HCT116 (cell line): ENCODE measurements at regions of chr10 and their contacts with region 1.

Region 1: DNA sequence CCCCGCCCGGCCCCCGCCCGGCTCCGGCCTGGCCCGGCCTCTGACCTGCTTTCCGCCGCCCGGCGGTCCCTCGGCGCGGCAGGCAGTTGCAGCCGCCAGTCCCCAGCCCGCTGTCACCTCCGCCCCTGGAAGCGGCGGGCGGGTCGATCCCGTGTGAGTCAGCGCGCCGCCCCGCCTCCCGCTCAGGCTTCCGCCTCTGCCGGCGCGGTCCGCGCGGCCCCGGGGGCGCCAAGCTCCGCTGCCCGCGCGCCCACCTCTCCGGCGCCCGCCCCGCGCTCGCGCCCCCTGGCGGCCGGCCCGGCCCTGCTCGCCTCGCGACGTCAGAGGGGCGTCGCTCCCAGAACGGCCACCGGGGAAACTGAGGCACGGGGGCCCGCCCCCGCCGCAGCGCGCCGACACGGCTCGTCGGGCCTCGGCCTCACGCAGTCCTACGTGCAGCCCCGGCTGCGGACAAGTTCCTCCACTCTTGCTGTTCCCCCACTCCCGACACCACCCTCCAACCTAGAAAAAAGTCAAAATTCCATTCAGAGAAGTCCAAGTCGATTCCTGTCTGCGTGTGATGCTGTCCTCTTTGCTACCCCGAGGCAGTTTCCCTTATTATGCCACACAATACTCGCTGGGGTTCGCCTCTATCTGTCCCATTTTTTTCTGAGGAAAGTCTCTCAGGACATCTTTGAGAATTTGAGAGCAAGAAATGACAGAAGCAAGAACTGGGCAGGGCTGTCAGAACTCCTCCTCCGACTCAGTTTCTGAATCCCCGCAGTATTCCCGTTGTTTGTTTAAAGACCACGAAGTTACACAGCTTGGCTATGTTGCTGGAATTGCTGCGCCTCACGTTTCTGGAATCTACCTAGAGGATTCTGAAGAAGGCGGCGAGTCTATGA is at the start of gene DNMBP:
- DNase-seq: peak; percentile 63
- ATAC-seq: peak; percentile 76
- H3K4me3 ChIP-seq: peak within 1 kb of the TSS; percentile 78 to 93
- H3K27ac ChIP-seq: peak within 1 kb of the TSS; percentile 98
- H3K4me1 ChIP-seq: peaks cover 27 to 46% of the 10 kb centered on the region in 2 experiments
- H3K27me3 ChIP-seq: no peaks in the 10 kb centered on the region
- CTCF ChIP-seq: peak in 2 of 3 experiments; percentile 54 to 56; a peak in 4 of 6 replicates
- POLR2A ChIP-seq: no peak
- RAD21 ChIP-seq: no peak
- total RNA-seq, gene DNMBP: 60.3 TPM

Region 2: GRCh38 chr10:99779335-99779734 is 230.7 kb before region 1 on chr10:
- CTCF ChIA-PET with region 1: no interaction called
- POLR2A ChIA-PET with region 1: no interaction called
- RAD21 ChIA-PET with region 1: no interaction called
- intact Hi-C with region 1: loop called (anchors 1 kb)
- DNase-seq: no peak
- ATAC-seq: peak; percentile 35
- H3K4me3 ChIP-seq: peak overlapping the region; percentile 36 to 53
- H3K27ac ChIP-seq: peak overlapping the region; percentile 100
- H3K4me1 ChIP-seq: peaks cover 89 to 97% of the 10 kb centered on the region in 2 experiments
- H3K27me3 ChIP-seq: no peaks in the 10 kb centered on the region
- CTCF ChIP-seq: no peak
- POLR2A ChIP-seq: no peak
- RAD21 ChIP-seq: no peak

Region 3: GRCh38 chr10:99906470-99906869 is 103.6 kb before region 1 on chr10:
- CTCF ChIA-PET with region 1: interaction called, 5 read pairs
- POLR2A ChIA-PET with region 1: interaction called, 4 read pairs
- RAD21 ChIA-PET with region 1: no interaction called
- intact Hi-C with region 1: loop called (anchors 2 kb)
- DNase-seq: peak; percentile 90
- ATAC-seq: peak; percentile 92
- H3K4me3 ChIP-seq: peak overlapping the region in 1 of 2 experiments; percentile 1; a peak in 1 of 4 replicates
- H3K27ac ChIP-seq: peak overlapping the region; percentile 51; the same call in 1 of the 2 replicates
- H3K4me1 ChIP-seq: peaks cover 38 to 58% of the 10 kb centered on the region in 2 experiments
- H3K27me3 ChIP-seq: no peaks in the 10 kb centered on the region
- CTCF ChIP-seq: peak; percentile 29 to 68 (median 38); a peak in 5 of 6 replicates
- POLR2A ChIP-seq: no peak
- RAD21 ChIP-seq: peak; percentile 88

Region 4: GRCh38 chr10:99996671-99997625 is 13.1 kb before region 1 on chr10:
- CTCF ChIA-PET with region 1: interaction called, 6 read pairs
- POLR2A ChIA-PET with region 1: interaction called, 10 read pairs
- RAD21 ChIA-PET with region 1: no interaction called
- intact Hi-C with region 1: no loop called
- DNase-seq: no peak
- ATAC-seq: no peak
- H3K4me3 ChIP-seq: no peak overlapping the region
- H3K27ac ChIP-seq: peak overlapping the region; percentile 1; the same call in 1 of the 2 replicates
- H3K4me1 ChIP-seq: peaks cover 47 to 69% of the 10 kb centered on the region in 2 experiments
- H3K27me3 ChIP-seq: no peaks in the 10 kb centered on the region
- CTCF ChIP-seq: no peak
- POLR2A ChIP-seq: no peak
- RAD21 ChIP-seq: no peak

Region 5: GRCh38 chr10:100046021-100046486 is 36.0 kb after region 1 on chr10:
- CTCF ChIA-PET with region 1: interaction called, 15 read pairs
- POLR2A ChIA-PET with region 1: interaction called, 6 read pairs
- RAD21 ChIA-PET with region 1: interaction called, 3 to 5 read pairs
- intact Hi-C with region 1: loop called (anchors 2 kb)
- DNase-seq: peak; percentile 86
- ATAC-seq: peak; percentile 81
- H3K4me3 ChIP-seq: no peak overlapping the region
- H3K27ac ChIP-seq: peak overlapping the region; percentile 6; the same call in 1 of the 2 replicates
- H3K4me1 ChIP-seq: peaks cover 35 to 41% of the 10 kb centered on the region in 2 experiments
- H3K27me3 ChIP-seq: no peaks in the 10 kb centered on the region
- CTCF ChIP-seq: peak in 2 of 3 experiments; percentile 99; a peak in 4 of 6 replicates
- POLR2A ChIP-seq: no peak
- RAD21 ChIP-seq: no peak